Activated CD4-positive, alpha-beta T cell treated with anti-CD3 and anti-CD28 coated beads for 36 hours (primary cell): ENCODE measurements at regions of chr12 and their contacts with region 1.

Region 1: DNA sequence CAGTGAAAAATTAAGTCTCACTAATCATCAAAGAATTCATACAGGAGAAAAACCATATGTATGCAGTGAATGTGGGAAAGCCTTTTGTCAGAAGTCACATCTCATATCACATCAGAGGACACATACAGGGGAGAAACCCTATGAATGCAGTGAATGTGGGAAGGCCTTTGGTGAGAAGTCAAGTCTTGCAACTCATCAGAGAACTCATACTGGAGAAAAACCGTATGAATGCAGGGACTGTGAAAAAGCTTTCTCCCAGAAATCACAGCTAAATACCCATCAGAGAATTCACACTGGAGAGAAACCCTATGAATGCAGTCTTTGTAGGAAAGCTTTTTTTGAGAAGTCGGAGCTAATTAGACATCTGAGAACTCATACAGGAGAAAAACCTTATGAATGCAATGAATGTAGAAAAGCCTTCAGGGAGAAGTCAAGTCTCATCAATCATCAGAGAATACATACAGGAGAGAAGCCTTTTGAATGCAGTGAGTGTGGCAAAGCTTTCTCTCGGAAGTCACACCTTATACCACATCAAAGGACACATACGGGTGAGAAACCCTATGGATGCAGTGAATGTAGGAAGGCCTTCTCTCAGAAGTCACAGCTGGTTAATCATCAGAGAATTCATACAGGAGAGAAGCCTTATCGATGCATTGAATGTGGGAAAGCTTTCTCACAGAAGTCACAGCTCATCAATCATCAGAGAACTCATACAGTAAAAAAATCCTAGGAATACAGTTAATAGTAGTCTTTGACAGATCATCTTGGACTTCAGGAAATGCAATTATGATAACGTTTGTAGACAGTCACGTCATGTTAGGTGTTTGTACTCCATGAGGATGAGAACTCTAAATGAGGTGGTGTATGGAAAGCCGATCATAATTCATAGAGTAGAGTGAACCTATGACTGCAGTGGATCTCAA is 21.2 kb downstream of the ZNF84 start:
- DNase-seq: no peak
- ATAC-seq: no peak
- H3K4me3 Mint-ChIP-seq: no peak overlapping the region
- H3K27ac Mint-ChIP-seq: no peak overlapping the region
- H3K4me1 Mint-ChIP-seq: no peaks in the 10 kb centered on the region
- H3K27me3 Mint-ChIP-seq: no peaks in the 10 kb centered on the region

Region 2: GRCh38 chr12:132925597-132926416 is 132.7 kb before region 1 on chr12:
- CTCF ChIA-PET with region 1: no interaction called
- POLR2A ChIA-PET with region 1: no interaction called
- intact Hi-C with region 1: loop called in 1 of 2 experiments (anchors 5 kb)
- DNase-seq: no peak
- ATAC-seq: no peak
- H3K4me3 Mint-ChIP-seq: no peak overlapping the region
- H3K27ac Mint-ChIP-seq: no peak overlapping the region
- H3K4me1 Mint-ChIP-seq: no peaks in the 10 kb centered on the region
- H3K27me3 Mint-ChIP-seq: no peaks in the 10 kb centered on the region

Region 3: GRCh38 chr12:133106253-133106652 is 47.8 kb after region 1 on chr12:
- CTCF ChIA-PET with region 1: interaction called, 3 read pairs
- POLR2A ChIA-PET with region 1: no interaction called
- intact Hi-C with region 1: loop called in 1 of 2 experiments (anchors 5 kb)
- DNase-seq: no peak
- ATAC-seq: no peak
- H3K4me3 Mint-ChIP-seq: no peak overlapping the region
- H3K27ac Mint-ChIP-seq: no peak overlapping the region
- H3K4me1 Mint-ChIP-seq: peaks cover 2% of the 10 kb centered on the region
- H3K27me3 Mint-ChIP-seq: no peaks in the 10 kb centered on the region

Region 4: DNA sequence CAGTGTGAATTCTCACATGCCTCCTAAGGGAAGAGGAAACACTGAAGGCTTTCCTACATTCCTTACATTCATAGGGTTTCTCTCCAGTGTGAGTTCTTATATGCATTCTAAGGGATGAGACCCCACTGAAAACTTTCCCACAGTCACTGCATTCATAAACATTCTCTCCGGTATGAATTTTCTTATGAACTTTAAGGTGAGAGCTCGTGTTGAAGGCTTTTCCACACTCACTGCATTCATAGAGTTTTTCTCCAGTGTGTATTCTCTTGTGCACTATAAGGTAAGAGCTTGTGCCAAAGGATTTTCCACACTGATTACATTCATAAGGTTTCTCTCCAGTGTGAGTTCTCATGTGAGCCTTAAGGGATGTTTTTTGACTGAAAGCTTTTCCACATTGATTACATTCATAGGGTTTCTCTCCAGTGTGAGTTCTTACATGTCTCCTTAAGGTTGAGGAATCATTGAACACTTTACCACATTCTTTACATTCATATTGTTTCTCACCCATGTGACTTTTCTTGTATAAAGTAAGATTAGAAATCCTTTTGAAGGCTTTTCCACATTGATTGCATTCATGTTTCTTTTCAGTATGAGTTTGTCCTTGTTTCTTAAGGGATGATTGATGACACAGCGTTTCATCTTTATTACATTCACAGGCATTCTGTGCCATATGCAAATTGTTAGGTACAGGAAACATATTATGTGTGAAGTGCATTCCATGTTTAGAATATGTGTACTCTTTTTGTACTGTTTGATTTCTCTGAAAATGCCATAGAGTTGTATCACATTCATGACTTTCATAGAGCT is 62.1 kb after region 1 on chr12:
- CTCF ChIA-PET with region 1: no interaction called
- POLR2A ChIA-PET with region 1: no interaction called
- intact Hi-C with region 1: loop called in 1 of 2 experiments (anchors 5 kb)
- DNase-seq: no peak
- ATAC-seq: no peak
- H3K4me3 Mint-ChIP-seq: no peak overlapping the region
- H3K27ac Mint-ChIP-seq: no peak overlapping the region
- H3K4me1 Mint-ChIP-seq: no peaks in the 10 kb centered on the region
- H3K27me3 Mint-ChIP-seq: no peaks in the 10 kb centered on the region